Right cardiac atrium (tissue), 5 donors: ENCODE measurements at regions of chr10 and their contacts with region 1.

Region 1: DNA sequence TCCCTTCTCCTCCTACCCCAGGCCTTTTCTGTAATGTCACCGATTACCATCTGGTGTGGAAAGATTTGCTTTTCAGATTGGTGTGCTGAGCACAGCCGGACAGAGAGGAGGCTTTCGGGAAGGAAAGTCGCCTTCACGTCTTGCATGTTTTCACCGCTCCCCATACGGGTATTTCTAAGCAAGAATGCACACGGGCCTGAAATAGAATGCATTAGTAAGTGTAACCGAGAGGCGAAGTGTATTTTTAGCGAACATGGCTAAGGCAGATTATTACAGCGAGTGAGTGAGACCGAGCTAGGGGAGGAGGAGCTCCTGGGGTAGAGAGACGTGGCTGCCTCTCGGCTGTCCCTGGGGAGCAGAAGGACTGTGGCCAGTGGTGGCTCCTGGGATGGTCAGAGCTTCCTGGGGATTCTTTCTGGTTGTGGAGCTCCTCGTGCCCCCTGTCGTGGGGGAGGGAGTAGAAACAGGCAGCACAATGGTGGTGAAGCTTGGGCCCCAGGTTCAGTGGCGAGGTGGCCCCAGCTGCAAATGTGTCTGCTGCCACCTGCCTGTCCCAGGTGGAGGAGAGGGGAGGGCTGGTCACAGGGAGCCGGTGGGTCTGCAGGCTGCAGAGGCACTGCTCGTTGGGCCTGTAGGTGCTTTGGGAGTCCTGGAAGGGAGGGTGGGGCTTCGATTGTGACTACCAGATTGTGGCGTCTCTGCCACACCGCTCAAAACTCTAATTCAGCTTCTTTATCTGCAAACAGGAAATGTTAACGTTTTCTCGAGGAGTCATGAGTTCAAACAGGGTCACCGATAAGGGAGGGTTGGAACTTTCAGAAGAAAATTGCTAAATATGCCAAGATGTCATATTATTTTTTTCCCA is 135.8 kb downstream of the CAMK1D start:
- DNase-seq: peak; percentile 34 to 78 (median 67)
- ATAC-seq: peak; percentile 75 to 79
- H3K4me3 ChIP-seq: no peak overlapping the region
- H3K27ac ChIP-seq: peak overlapping the region; percentile 96
- H3K4me1 ChIP-seq: peaks cover 10% of the 10 kb centered on the region
- H3K27me3 ChIP-seq: no peaks in the 10 kb centered on the region

Region 2: GRCh38 chr10:12299222-12299965 is 185.8 kb before region 1 on chr10:
- intact Hi-C with region 1: no loop called
- DNase-seq: no peak
- ATAC-seq: no peak
- H3K4me3 ChIP-seq: no peak overlapping the region
- H3K27ac ChIP-seq: no peak overlapping the region
- H3K4me1 ChIP-seq: no peaks in the 10 kb centered on the region
- H3K27me3 ChIP-seq: no peaks in the 10 kb centered on the region

Region 3: DNA sequence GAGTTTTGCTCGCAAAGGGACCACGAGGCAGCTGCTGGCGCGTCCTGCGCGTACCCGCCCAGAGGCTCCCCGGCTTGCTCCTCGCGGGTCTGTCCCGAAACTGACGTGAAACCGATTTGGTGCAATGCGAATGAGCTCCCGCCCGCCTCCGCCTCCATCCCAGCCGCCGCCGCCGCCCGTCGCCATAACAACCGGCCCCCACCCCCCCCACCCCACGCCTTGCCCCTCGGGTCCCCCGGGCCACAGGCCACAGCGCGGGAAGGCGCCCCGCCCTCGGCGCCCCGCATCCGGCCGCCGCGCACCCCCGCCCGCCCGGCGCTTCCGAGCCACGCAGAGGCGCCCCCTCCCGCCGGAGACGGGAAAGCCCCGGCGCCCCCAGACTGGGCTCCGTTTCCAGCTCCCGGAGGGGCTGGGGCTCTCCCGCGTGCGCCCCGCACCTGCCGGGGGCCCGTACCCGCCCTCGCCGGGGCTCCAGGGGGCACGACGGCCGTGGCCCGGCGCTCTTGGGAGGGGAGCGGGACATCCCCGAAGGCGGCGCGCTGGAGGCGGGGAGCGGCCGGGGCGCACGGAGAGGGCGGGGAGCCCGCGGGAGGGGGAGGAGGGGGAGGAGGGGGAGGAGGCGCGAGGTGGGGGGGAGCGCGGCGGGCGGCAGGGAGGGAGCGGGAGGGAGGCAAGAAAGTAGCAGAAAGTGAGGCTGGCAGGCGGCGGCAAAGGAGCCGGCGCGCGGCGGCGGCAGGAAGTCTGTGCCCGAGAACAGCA is 136.1 kb before region 1 on chr10 and contains the start of gene CAMK1D:
- intact Hi-C with region 1: loop called in 1 of 4 experiments (anchors 5 kb)
- DNase-seq: peak; percentile 88 to 96 (median 95)
- ATAC-seq: peak; percentile 85 to 89
- H3K4me3 ChIP-seq: peak within 1 kb of the TSS; percentile 97
- H3K27ac ChIP-seq: peak within 1 kb of the TSS; percentile 89
- H3K4me1 ChIP-seq: no peaks in the 10 kb centered on the region
- H3K27me3 ChIP-seq: no peaks in the 10 kb centered on the region
- total RNA-seq, gene CAMK1D: 26.4 to 44.1 (median 27.6) TPM

Region 4: DNA sequence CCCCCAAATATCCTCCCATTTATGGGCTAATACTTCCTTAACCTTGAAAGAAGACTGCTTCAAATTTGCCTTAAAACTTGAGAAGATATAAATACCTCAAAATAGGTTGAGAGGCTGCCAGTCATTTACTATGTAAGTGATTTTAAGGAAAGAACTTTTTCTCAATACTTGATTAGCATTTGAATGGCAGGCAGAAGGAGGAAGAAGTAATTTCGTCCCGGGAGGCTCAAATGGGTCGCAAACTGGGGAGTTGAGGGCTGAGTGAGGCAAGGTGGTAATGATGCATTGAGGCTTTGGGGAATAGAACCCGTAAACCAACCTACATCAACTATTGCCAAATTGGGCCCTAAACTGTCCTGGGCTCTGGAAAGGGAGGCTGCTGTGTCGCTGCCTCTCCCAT is 124.7 kb before region 1 on chr10:
- intact Hi-C with region 1: no loop called
- DNase-seq: no peak
- ATAC-seq: no peak
- H3K4me3 ChIP-seq: no peak overlapping the region
- H3K27ac ChIP-seq: no peak overlapping the region
- H3K4me1 ChIP-seq: no peaks in the 10 kb centered on the region
- H3K27me3 ChIP-seq: no peaks in the 10 kb centered on the region